Ovary (tissue), 10 donors: ENCODE measurements at regions of chr1 and their contacts with region 1.

Region 1: GRCh38 chr1:44220001-44220733 is 6.9 kb downstream of the DMAP1 start:
- DNase-seq: no peak
- H3K4me3 ChIP-seq: no peak overlapping the region
- H3K27ac ChIP-seq: no peak overlapping the region
- H3K4me1 ChIP-seq: no peaks in the 10 kb centered on the region
- H3K27me3 ChIP-seq: no peaks in the 10 kb centered on the region
- CTCF ChIP-seq: no peak
- EP300 ChIP-seq: no peak
- POLR2A ChIP-seq: no peak

Region 2: GRCh38 chr1:44318097-44319088 is 98.2 kb after region 1 on chr1:
- intact Hi-C with region 1: loop called in 1 of 4 experiments (anchors 5 kb)
- DNase-seq: peak in 2 of 5 donors; percentile 30 to 43
- H3K4me3 ChIP-seq: no peak overlapping the region
- H3K27ac ChIP-seq: no peak overlapping the region
- H3K4me1 ChIP-seq: no peaks in the 10 kb centered on the region
- H3K27me3 ChIP-seq: no peaks in the 10 kb centered on the region
- CTCF ChIP-seq: peak in 2 of 3 donors; percentile 34 to 42
- EP300 ChIP-seq: no peak
- POLR2A ChIP-seq: no peak

Region 3: GRCh38 chr1:44594871-44595746 is 374.9 kb after region 1 on chr1:
- intact Hi-C with region 1: loop called in 1 of 4 experiments (anchors 10 kb)
- DNase-seq: peak; percentile 36 to 71 (median 65)
- H3K4me3 ChIP-seq: no peak overlapping the region
- H3K27ac ChIP-seq: no peak overlapping the region
- H3K4me1 ChIP-seq: no peaks in the 10 kb centered on the region
- H3K27me3 ChIP-seq: no peaks in the 10 kb centered on the region
- CTCF ChIP-seq: peak in 2 of 3 donors; percentile 55 to 56
- EP300 ChIP-seq: no peak
- POLR2A ChIP-seq: no peak